B cell (primary cell): ENCODE measurements at regions of chr14 and their contacts with region 1.

Region 1: DNA sequence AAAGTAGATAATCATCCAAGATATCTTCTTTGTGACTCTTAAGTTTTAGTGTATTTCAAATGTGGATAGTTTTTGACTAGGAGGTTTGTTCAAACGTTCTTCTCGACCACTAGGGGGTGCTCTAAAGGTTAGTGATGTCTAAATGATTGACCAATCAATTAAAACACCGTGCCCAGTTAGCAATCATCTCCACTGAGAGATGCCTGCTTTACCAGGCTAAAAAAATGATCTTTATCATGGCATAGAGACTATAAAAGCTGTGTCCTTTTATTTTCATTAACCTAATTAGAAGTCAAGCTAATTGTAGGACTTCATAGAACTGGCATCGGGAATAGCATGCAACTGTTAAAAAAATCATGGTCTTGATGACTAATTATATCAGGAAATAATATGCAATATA is 153.9 kb downstream of the PRKCH start:
- DNase-seq: peak; percentile 81
- ATAC-seq: no peak
- H3K4me3 ChIP-seq: no peak overlapping the region
- H3K4me3 Mint-ChIP-seq: peak overlapping the region; percentile 53
- H3K27ac ChIP-seq: peak overlapping the region; percentile 97 to 98
- H3K27ac Mint-ChIP-seq: peak overlapping the region; percentile 86
- H3K4me1 ChIP-seq: peaks cover 90 to 96% of the 10 kb centered on the region in 2 donors
- H3K4me1 Mint-ChIP-seq: peaks cover 93% of the 10 kb centered on the region
- H3K27me3 ChIP-seq: no peaks in the 10 kb centered on the region
- H3K27me3 Mint-ChIP-seq: no peaks in the 10 kb centered on the region
- CTCF ChIP-seq: peak; percentile 80

Region 2: GRCh38 chr14:61438860-61439684 is 36.2 kb before region 1 on chr14:
- CTCF ChIA-PET with region 1: no interaction called
- POLR2A ChIA-PET with region 1: no interaction called
- intact Hi-C with region 1: no loop called
- DNase-seq: no peak
- ATAC-seq: no peak
- H3K4me3 ChIP-seq: no peak overlapping the region
- H3K4me3 Mint-ChIP-seq: peak overlapping the region; percentile 1
- H3K27ac ChIP-seq: no peak overlapping the region
- H3K27ac Mint-ChIP-seq: no peak overlapping the region
- H3K4me1 ChIP-seq: peaks cover 1 to 13% of the 10 kb centered on the region in 2 donors
- H3K4me1 Mint-ChIP-seq: peaks cover 17% of the 10 kb centered on the region
- H3K27me3 ChIP-seq: peaks cover 0 to 5% (median 0%) of the 10 kb centered on the region in 4 experiments
- H3K27me3 Mint-ChIP-seq: peaks cover 4% of the 10 kb centered on the region
- CTCF ChIP-seq: no peak

Region 3: DNA sequence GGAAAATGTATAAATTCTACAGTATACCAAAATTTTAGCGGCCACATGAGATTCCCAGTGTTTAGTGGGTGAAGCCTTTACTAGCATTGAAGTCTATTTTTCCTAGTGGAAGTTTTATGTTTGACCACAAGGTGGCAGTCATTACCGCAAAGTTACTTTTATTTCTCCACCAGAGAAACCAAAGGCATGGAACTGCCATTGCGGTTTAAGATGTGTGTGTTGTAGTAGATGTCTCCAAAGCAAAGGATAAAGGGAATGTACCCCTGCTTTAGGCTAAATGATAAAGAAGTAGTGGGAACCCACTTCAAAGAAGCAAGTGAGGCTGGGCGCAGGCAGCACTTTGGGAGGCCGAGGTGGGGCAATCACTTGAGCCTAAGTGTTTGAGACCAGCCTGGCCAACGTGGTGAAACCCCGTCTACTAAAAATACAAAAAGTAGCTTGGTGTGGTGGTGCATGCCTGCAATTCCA is 13.5 kb before region 1 on chr14:
- CTCF ChIA-PET with region 1: interaction called, 28 read pairs
- POLR2A ChIA-PET with region 1: interaction called, 4 read pairs
- intact Hi-C with region 1: loop called (anchors 1 kb)
- DNase-seq: peak; percentile 80
- ATAC-seq: peak; percentile 70
- H3K4me3 ChIP-seq: no peak overlapping the region
- H3K4me3 Mint-ChIP-seq: peak overlapping the region; percentile 21
- H3K27ac ChIP-seq: no peak overlapping the region
- H3K27ac Mint-ChIP-seq: peak overlapping the region; percentile 74
- H3K4me1 ChIP-seq: peaks cover 8 to 18% of the 10 kb centered on the region in 2 donors
- H3K4me1 Mint-ChIP-seq: peaks cover 30% of the 10 kb centered on the region
- H3K27me3 ChIP-seq: no peaks in the 10 kb centered on the region
- H3K27me3 Mint-ChIP-seq: no peaks in the 10 kb centered on the region
- CTCF ChIP-seq: peak; percentile 94

Region 4: GRCh38 chr14:61553725-61554641 is 78.7 kb after region 1 on chr14:
- CTCF ChIA-PET with region 1: interaction called, 30 read pairs
- POLR2A ChIA-PET with region 1: interaction called, 6 read pairs
- intact Hi-C with region 1: loop called (anchors 1 kb)
- DNase-seq: no peak
- ATAC-seq: no peak
- H3K4me3 ChIP-seq: peak overlapping the region in 1 of 5 experiments; percentile 4
- H3K4me3 Mint-ChIP-seq: peak overlapping the region; percentile 85
- H3K27ac ChIP-seq: peak overlapping the region; percentile 74 to 81
- H3K27ac Mint-ChIP-seq: peak overlapping the region; percentile 98
- H3K4me1 ChIP-seq: peaks cover 32 to 47% of the 10 kb centered on the region in 2 donors
- H3K4me1 Mint-ChIP-seq: peaks cover 58% of the 10 kb centered on the region
- H3K27me3 ChIP-seq: no peaks in the 10 kb centered on the region
- H3K27me3 Mint-ChIP-seq: no peaks in the 10 kb centered on the region
- CTCF ChIP-seq: no peak

Region 5: GRCh38 chr14:61662437-61663311 is 187.4 kb after region 1 on chr14:
- CTCF ChIA-PET with region 1: interaction called, 19 read pairs
- POLR2A ChIA-PET with region 1: interaction called, 3 read pairs
- intact Hi-C with region 1: loop called (anchors 1 kb)
- DNase-seq: peak; percentile 59
- ATAC-seq: peak; percentile 66
- H3K4me3 ChIP-seq: peak overlapping the region in 1 of 5 experiments; percentile 52
- H3K4me3 Mint-ChIP-seq: peak overlapping the region; percentile 84
- H3K27ac ChIP-seq: peak overlapping the region; percentile 48 to 82
- H3K27ac Mint-ChIP-seq: peak overlapping the region; percentile 91
- H3K4me1 ChIP-seq: peaks cover 59 to 60% of the 10 kb centered on the region in 2 donors
- H3K4me1 Mint-ChIP-seq: peaks cover 59% of the 10 kb centered on the region
- H3K27me3 ChIP-seq: no peaks in the 10 kb centered on the region
- H3K27me3 Mint-ChIP-seq: no peaks in the 10 kb centered on the region
- CTCF ChIP-seq: no peak

Region 6: DNA sequence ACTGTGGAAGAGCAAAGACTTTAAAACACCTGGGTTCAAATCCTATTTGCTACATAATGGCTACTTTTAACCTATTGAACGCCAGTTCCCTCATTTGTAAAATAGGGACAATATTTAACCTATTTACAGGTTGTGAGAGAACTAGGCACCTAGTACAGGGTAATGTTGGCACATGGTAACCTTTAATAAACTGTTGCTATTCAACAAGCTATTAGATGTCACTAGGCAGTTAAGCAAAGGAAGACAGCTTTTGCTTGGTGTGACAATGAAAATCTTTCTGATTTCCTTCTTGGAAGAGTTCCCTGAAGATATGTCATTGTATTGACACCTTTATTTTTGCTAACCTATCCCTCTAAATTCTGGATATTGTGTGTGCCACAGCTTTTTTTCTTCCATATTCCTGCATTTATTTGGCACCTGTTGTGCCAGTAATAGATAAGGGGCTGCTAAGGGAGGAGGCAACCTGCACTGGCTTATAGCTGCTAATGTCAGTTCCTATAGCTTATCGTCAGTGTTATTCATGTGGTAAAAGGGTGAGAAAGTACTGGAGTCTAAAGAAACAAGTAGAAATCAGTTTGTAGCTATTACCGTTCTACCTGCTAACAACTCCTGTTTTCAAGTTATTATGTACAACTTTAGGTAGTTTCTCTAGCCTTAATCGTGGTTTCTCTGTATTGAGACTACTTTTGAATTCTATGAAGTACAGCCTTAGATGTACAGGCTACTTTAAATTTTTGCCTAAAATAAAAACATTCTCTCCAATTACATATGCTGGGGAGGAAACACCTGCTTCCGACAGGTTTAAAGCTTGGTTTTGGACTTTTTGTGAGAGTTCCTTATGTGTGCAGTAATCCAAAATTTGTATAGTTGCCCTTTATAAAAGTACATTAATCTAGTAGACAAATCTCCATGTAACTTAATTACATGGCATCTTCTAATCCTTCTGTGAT is 244.3 kb after region 1 on chr14:
- CTCF ChIA-PET with region 1: interaction called, 34 read pairs
- POLR2A ChIA-PET with region 1: interaction called, 6 read pairs
- intact Hi-C with region 1: loop called (anchors 5 kb)
- DNase-seq: peak; percentile 46
- ATAC-seq: peak; percentile 37
- H3K4me3 ChIP-seq: peak overlapping the region in 4 of 5 experiments; percentile 5 to 41 (median 24)
- H3K4me3 Mint-ChIP-seq: peak overlapping the region; percentile 82
- H3K27ac ChIP-seq: peak overlapping the region; percentile 78 to 88
- H3K27ac Mint-ChIP-seq: peak overlapping the region; percentile 80
- H3K4me1 ChIP-seq: peaks cover 44 to 59% of the 10 kb centered on the region in 2 donors
- H3K4me1 Mint-ChIP-seq: peaks cover 74% of the 10 kb centered on the region
- H3K27me3 ChIP-seq: no peaks in the 10 kb centered on the region
- H3K27me3 Mint-ChIP-seq: no peaks in the 10 kb centered on the region
- CTCF ChIP-seq: no peak

Region 7: DNA sequence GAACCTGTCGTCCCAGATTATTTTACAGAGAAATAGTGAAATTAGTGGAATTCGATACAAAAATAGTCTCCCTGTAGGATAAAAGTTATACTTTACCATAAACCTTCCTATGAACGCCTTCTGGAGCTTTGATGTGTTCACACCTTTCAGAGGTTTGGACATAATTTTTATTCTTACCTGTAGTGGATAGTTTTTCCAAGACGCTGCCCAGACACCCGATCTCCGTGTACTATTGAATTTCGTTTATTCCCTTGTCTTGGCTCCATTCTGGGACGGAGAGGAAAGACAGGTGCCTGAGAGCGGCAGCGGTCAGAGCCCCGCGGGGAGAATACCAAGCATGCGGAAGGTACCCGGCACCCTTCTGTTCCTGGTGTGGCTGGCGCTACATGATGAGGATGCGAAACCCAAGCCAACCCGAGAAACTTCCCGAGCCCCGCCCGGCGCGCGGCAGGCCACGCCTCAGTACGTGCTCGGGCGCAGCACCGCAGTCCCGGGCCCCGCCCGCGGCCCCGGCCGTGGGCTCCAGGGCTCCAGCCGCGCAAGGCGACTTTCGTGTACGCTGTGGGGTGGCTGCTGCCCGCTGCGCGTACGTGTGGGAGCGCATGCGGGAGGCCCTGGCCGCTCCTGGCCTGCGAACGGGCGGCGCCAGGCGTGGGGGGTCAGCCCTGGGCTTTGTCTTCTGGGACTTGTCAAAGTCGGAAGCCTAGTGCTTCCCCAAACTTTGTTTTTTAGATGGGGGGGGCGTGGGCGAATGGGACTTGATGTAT is 275.6 kb after region 1 on chr14:
- CTCF ChIA-PET with region 1: interaction called, 3 read pairs
- POLR2A ChIA-PET with region 1: interaction called, 3 read pairs
- intact Hi-C with region 1: loop called (anchors 5 kb)
- DNase-seq: peak; percentile 91
- ATAC-seq: peak; percentile 91
- H3K4me3 ChIP-seq: peak overlapping the region; percentile 47 to 71 (median 59)
- H3K4me3 Mint-ChIP-seq: peak overlapping the region; percentile 92
- H3K27ac ChIP-seq: peak overlapping the region; percentile 47 to 73
- H3K27ac Mint-ChIP-seq: peak overlapping the region; percentile 93
- H3K4me1 ChIP-seq: peaks cover 25 to 27% of the 10 kb centered on the region in 2 donors
- H3K4me1 Mint-ChIP-seq: peaks cover 42% of the 10 kb centered on the region
- H3K27me3 ChIP-seq: no peaks in the 10 kb centered on the region
- H3K27me3 Mint-ChIP-seq: no peaks in the 10 kb centered on the region
- CTCF ChIP-seq: no peak